ENCODE measurements at regions of chr15 and their contacts with region 1.

Region 1: GRCh38 chr15:37995461-37996347 is 61.3 kb downstream of the TMCO5A start:
- DNase-seq: no peak
- H3K4me3 ChIP-seq: no peak overlapping the region
- CTCF ChIP-seq: peak; percentile 36

Region 2: DNA sequence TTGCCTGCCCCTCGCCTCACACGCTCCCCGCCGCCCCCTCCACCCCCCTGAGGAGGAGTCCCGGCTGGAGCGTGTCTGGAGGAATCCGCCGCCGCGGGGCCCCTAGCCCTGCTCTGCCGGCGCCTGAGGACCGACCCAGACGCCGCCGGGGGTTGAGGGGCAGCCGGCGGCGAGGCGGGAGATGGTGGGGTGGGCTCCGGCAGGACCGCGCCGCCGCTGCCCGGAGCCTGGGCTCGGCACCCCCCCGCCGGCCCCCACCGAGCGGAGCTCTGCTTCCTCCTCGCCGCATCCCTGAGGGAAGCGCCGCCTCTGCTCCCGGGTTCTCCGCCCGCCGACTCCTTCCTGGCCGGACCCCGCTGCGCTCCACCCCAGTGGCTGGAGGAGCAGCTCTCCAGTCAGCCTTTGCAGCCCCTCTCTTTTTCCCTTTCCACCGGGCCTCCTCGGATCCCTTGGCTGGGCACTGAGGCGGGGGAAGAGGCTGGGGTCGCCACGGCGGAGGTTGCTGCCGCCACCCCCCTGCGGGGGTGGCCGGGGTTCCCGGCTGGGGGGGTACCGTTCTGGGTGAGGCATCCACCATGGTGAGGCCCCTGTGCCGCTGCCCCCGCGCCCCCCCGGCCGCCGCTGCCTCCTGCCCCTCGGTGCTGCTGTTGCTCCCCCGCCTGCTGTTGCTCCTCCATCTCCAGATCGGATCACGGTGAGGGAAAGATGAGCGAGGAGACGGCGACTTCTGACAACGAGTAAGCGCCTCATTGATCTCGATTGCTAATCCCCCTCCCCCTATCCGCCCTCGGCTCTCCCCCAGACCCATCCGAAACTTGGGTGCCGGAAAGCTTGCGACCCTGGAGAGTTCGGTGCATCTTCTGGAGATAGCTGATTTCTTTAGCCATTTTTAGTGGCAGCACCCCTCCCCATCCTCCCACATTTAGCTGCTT is 257.0 kb after region 1 on chr15 and contains the start of gene SPRED1:
- CTCF ChIA-PET with region 1: interaction called, 26 read pairs
- POLR2A ChIA-PET with region 1: interaction called, 7 read pairs
- DNase-seq: no peak
- H3K4me3 ChIP-seq: peak within 1 kb of the TSS; percentile 91
- CTCF ChIP-seq: no peak

Region 3: GRCh38 chr15:38389924-38390542 is 394.3 kb after region 1 on chr15:
- CTCF ChIA-PET with region 1: interaction called, 81 read pairs
- POLR2A ChIA-PET with region 1: no interaction called
- DNase-seq: no peak
- H3K4me3 ChIP-seq: no peak overlapping the region
- CTCF ChIP-seq: peak; percentile 76

Region 4: DNA sequence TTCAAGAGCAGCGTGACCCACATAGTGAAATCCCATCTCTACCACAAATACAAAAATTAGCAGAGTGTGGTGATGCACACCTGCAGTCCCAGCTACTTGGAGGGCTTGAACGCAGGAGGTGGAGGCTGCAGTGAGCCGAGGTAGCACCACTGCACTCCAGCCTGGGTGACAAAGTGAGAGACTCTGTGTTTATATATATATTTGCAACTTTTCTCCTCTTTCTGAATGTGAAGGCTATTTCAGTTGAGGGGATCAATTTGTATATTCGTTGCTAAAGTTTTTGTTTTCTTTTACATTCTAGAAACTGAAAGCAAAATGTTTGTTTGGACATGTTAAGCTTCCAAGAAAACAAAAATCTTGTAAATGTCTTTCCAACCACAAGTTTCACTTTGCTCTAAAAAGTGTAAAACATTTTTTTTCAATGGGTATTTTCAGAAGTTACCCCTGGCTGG is 428.4 kb after region 1 on chr15:
- CTCF ChIA-PET with region 1: interaction called, 10 read pairs
- POLR2A ChIA-PET with region 1: no interaction called
- DNase-seq: no peak
- H3K4me3 ChIP-seq: no peak overlapping the region
- CTCF ChIP-seq: no peak

Region 5: DNA sequence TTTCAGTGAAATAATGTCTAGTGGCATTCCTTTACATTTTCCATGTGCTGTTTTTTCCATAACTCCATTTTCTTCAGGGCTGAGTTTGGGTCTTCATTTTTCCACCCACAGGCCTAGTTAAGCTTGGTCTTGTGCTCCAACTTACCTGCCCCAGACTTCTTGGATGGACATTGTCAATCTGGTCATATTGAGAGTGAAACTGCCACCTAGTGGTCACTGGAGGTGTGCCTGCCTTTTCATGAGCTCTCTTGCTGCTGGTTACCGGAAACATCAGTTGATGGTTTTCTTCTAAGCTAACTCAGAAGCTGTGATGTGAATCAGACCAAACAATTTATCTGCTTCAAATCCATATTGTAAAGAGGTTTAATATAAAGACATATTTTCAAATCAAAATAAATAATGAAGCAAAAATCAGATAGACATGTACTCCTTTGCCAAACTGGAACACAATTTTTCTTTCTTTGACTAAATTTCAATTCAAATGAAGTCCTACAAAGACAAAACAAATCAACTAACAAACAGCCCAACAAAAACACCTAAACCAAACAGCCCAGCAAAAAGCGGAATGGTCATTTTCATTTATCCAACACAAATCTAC is 704.0 kb after region 1 on chr15:
- CTCF ChIA-PET with region 1: interaction called, 24 read pairs
- POLR2A ChIA-PET with region 1: no interaction called
- DNase-seq: no peak
- H3K4me3 ChIP-seq: no peak overlapping the region
- CTCF ChIP-seq: peak; percentile 79